ENCODE measurements at regions of chr9 and their contacts with region 1.

Region 1: GRCh38 chr9:96441798-96442445 is 8.0 kb upstream of the HABP4 start:
- DNase-seq: peak; percentile 30 to 78 (median 38)
- ATAC-seq: peak; percentile 83
- H3K4me3 ChIP-seq: no peak overlapping the region
- H3K27ac ChIP-seq: no peak overlapping the region
- H3K4me1 ChIP-seq: no peaks in the 10 kb centered on the region
- H3K27me3 ChIP-seq: no peaks in the 10 kb centered on the region
- CTCF ChIP-seq: peak; percentile 76 to 90 (median 80)
- EP300 ChIP-seq: no peak
- POLR2A ChIP-seq: no peak
- RAD21 ChIP-seq: peak; percentile 61 to 88

Region 2: DNA sequence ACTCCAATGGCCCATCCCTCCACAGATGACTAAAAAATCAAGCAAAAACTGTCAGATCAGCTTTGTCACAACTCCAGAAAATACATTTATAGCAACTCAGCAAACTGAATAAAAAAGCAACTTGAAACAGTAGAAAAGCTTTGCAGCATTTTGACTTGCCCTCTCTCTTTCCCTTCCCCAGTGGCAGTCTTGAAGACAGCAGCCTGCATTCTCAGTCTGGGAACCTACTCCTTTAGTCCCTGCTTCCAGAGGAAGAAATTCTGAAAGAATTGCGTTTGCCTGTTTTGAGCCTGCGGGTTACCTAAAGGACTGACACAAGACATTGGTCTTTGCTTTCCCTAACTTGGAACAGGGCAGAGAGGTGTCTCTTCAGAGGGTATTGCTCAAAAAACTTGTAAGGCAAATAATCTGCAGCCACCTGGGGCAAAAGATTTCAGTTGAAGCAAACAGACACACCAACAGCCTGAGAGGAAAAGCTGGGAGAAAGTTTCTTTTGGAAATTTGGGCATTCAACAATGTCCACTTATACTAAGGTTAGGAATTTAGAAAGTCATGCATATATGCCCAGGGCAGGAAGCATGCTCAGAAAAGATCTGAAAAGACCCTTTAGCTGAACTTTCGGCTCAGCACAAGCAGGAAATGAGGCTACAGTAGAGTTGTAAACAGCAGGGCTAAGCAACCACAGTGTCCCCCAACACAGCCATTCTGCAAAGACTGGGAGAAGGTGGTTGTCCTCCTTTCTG is 43.2 kb before region 1 on chr9:
- CTCF ChIA-PET with region 1: no interaction called
- POLR2A ChIA-PET with region 1: no interaction called
- in situ Hi-C with region 1: no loop called
- intact Hi-C with region 1: no loop called
- DNase-seq: no peak
- ATAC-seq: peak; percentile 20; the same call in 1 of the 3 replicates
- H3K4me3 ChIP-seq: no peak overlapping the region
- H3K27ac ChIP-seq: 0 out of 3 replicates have a peak overlapping the region, but pooled peaks have one; percentile 2
- H3K4me1 ChIP-seq: no peaks in the 10 kb centered on the region; a peak in 2 of 5 replicates
- H3K27me3 ChIP-seq: no peaks in the 10 kb centered on the region
- CTCF ChIP-seq: no peak
- EP300 ChIP-seq: no peak
- POLR2A ChIP-seq: no peak
- RAD21 ChIP-seq: no peak

Region 3: DNA sequence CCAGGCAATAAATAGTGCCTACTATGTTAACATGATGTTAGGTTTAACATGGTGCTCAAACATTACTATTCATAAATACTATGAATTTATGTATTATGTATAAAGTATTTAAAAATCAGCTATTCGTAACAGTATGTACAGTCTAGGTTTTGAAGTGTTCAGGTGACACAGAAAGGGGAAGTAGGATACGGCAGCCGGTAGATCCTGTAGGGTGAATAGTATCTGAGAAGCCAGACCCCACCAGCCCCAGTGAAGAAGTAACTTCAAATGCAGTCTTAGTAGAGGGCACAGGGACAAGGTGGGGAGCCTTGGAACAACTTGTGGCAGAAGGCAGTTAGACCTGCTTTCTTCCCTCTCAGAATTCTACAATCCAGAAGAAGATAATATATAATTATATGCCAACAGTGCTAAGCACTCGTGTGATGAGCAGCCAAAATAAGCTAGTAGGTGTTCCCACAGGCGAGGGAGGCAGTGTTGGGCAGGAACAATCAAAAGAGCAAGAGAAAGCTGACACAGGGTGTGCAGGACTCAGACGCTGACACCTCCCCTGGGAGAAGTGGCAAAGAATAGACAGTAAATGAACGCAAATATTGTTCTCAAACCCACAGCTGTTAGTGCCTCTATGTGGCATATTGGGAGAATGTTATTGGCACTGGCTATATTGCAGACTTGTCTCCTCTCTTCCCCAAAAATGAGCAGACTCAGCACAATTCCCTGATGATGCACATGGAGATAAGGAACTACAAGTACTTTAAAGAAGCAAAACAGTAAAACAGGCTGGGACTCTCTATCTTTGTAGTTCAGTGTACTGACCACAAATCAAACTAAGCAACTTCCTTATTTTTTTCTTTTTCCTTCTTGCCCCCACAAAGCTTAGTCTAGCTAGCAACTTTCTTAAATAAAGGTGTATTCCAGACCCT is 28.4 kb before region 1 on chr9:
- CTCF ChIA-PET with region 1: no interaction called
- POLR2A ChIA-PET with region 1: no interaction called
- in situ Hi-C with region 1: no loop called
- intact Hi-C with region 1: no loop called
- DNase-seq: peak in 1 of 4 experiments; percentile 39
- ATAC-seq: no peak
- H3K4me3 ChIP-seq: no peak overlapping the region
- H3K27ac ChIP-seq: peak overlapping the region; percentile 28; the same call in 1 of the 3 replicates
- H3K4me1 ChIP-seq: peaks cover 15 to 24% of the 10 kb centered on the region in 2 experiments; a peak in 3 of 5 replicates
- H3K27me3 ChIP-seq: no peaks in the 10 kb centered on the region
- CTCF ChIP-seq: no peak
- EP300 ChIP-seq: 0 out of 2 replicates have a peak, but pooled peaks have one; percentile 23
- POLR2A ChIP-seq: no peak
- RAD21 ChIP-seq: no peak

Region 4: GRCh38 chr9:96566498-96567207 is 124.7 kb after region 1 on chr9:
- CTCF ChIA-PET with region 1: no interaction called
- POLR2A ChIA-PET with region 1: no interaction called
- in situ Hi-C with region 1: no loop called
- intact Hi-C with region 1: loop called (anchors 2 kb)
- DNase-seq: peak; percentile 81 to 87 (median 84)
- ATAC-seq: peak; percentile 98
- H3K4me3 ChIP-seq: peak overlapping the region; percentile 45
- H3K27ac ChIP-seq: peak overlapping the region; percentile 52; the same call in 1 of the 3 replicates
- H3K4me1 ChIP-seq: peaks cover 2 to 12% of the 10 kb centered on the region in 2 experiments; a peak in 2 of 5 replicates
- H3K27me3 ChIP-seq: peaks cover under 1 to 4% of the 10 kb centered on the region in 2 experiments; a peak in 2 of 5 replicates
- CTCF ChIP-seq: peak; percentile 71 to 77 (median 77)
- EP300 ChIP-seq: no peak
- POLR2A ChIP-seq: no peak
- RAD21 ChIP-seq: peak; percentile 41 to 48

Region 5: GRCh38 chr9:96667361-96667728 is 225.4 kb after region 1 on chr9:
- CTCF ChIA-PET with region 1: interaction called, 5 read pairs
- POLR2A ChIA-PET with region 1: no interaction called
- in situ Hi-C with region 1: loop called (anchors 25 kb)
- intact Hi-C with region 1: loop called (anchors 1 kb)
- DNase-seq: no peak
- ATAC-seq: no peak
- H3K4me3 ChIP-seq: no peak overlapping the region
- H3K27ac ChIP-seq: no peak overlapping the region
- H3K4me1 ChIP-seq: peaks cover 0 to 4% of the 10 kb centered on the region in 2 experiments; a peak in 1 of 5 replicates
- H3K27me3 ChIP-seq: no peaks in the 10 kb centered on the region
- CTCF ChIP-seq: no peak
- EP300 ChIP-seq: no peak
- POLR2A ChIP-seq: no peak
- RAD21 ChIP-seq: no peak

Measured in K562 (cell line).